SK-N-SH (cell line): ENCODE measurements at regions of chr19 and their contacts with region 1.

Region 1: DNA sequence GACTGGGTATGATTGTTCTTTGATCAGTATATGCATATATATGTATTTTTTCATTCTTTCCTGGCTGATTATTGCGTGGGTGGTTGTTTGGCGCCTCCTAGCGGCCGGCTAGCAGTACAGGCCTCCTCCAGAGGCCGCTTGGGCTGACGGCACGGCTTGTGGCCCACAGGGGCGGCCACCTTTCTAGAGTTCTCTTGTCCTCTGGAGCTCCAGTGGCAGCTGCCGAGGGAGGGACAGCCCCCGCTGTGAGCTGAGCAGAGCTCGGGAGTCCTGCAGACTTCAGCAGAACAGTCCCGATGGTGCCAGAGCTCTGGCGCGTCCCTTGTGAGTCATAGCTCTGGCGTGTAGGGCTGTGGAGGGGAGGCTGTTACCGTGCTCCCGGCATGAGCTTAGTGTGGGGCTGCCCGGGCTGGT is 22.5 kb upstream of the ZNF429 start:
- DNase-seq: peak; percentile 81
- H3K4me3 ChIP-seq: peak overlapping the region in 1 of 2 experiments; percentile 33; a peak in 1 of 4 replicates
- H3K27ac ChIP-seq: no peak overlapping the region
- H3K4me1 ChIP-seq: no peaks in the 10 kb centered on the region
- H3K27me3 ChIP-seq: no peaks in the 10 kb centered on the region
- CTCF ChIP-seq: peak; percentile 52
- EP300 ChIP-seq: no peak
- RAD21 ChIP-seq: peak; percentile 76

Region 2: GRCh38 chr19:21202865-21203494 is 279.9 kb before region 1 on chr19:
- CTCF ChIA-PET with region 1: interaction called, 48 read pairs
- POLR2A ChIA-PET with region 1: no interaction called
- DNase-seq: peak; percentile 49
- H3K4me3 ChIP-seq: no peak overlapping the region
- H3K27ac ChIP-seq: no peak overlapping the region
- H3K4me1 ChIP-seq: no peaks in the 10 kb centered on the region; a peak in 1 of 4 replicates
- H3K27me3 ChIP-seq: no peaks in the 10 kb centered on the region
- CTCF ChIP-seq: peak; percentile 64
- EP300 ChIP-seq: no peak
- RAD21 ChIP-seq: peak; percentile 84

Region 3: DNA sequence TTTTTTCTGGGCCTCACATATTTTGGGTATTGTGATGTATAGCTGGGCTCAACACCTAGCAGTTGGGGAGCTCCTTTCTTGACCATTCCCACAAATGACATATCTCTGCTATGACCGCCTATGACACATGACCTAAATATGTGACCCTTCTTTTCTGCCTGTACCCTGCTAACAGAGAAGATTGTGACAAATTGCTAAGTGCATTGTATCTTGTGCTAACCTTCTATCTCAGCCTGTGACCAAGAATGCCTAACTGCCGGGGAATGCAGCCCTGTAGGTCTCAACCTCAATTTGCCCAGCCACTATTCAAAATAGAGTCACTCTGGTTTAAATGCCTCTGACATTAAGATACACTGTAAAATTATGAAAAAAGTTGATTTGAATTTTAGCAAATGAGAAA is 15.8 kb after region 1 on chr19:
- CTCF ChIA-PET with region 1: interaction called, 19 read pairs
- POLR2A ChIA-PET with region 1: no interaction called
- DNase-seq: no peak
- H3K4me3 ChIP-seq: no peak overlapping the region
- H3K27ac ChIP-seq: no peak overlapping the region
- H3K4me1 ChIP-seq: no peaks in the 10 kb centered on the region
- H3K27me3 ChIP-seq: no peaks in the 10 kb centered on the region
- CTCF ChIP-seq: no peak
- EP300 ChIP-seq: no peak
- RAD21 ChIP-seq: no peak

Region 4: GRCh38 chr19:21691661-21692060 is 208.8 kb after region 1 on chr19:
- CTCF ChIA-PET with region 1: interaction called, 38 read pairs
- POLR2A ChIA-PET with region 1: no interaction called
- DNase-seq: no peak
- H3K4me3 ChIP-seq: no peak overlapping the region
- H3K27ac ChIP-seq: no peak overlapping the region
- H3K4me1 ChIP-seq: peaks cover 0 to 3% of the 10 kb centered on the region in 2 experiments; a peak in 1 of 4 replicates
- H3K27me3 ChIP-seq: no peaks in the 10 kb centered on the region
- CTCF ChIP-seq: no peak
- EP300 ChIP-seq: no peak
- RAD21 ChIP-seq: no peak

Region 5: DNA sequence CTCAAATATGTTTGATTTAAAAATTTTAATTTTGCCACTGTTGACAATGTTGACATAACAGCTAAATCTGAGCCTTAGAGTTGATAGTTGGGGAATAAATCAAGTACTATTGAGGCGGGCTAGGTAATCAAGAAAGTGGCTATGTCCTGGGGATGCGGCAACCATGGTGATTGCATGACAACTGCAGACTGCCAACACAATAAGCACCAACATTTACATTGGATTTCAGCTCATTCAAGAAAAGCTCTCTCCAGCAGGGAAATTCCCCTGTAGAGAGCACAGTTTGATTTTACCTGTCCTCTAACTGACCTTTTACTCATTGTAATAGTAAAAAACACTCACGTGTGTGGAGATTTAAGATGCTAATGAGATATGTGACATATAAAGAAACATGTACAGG is 221.4 kb after region 1 on chr19:
- CTCF ChIA-PET with region 1: interaction called, 38 read pairs
- POLR2A ChIA-PET with region 1: no interaction called
- DNase-seq: no peak
- H3K4me3 ChIP-seq: no peak overlapping the region
- H3K27ac ChIP-seq: no peak overlapping the region
- H3K4me1 ChIP-seq: no peaks in the 10 kb centered on the region
- H3K27me3 ChIP-seq: no peaks in the 10 kb centered on the region
- CTCF ChIP-seq: no peak
- EP300 ChIP-seq: no peak
- RAD21 ChIP-seq: no peak